CD14-positive monocyte (primary cell): ENCODE measurements at regions of chr3 and their contacts with region 1.

Region 1: DNA sequence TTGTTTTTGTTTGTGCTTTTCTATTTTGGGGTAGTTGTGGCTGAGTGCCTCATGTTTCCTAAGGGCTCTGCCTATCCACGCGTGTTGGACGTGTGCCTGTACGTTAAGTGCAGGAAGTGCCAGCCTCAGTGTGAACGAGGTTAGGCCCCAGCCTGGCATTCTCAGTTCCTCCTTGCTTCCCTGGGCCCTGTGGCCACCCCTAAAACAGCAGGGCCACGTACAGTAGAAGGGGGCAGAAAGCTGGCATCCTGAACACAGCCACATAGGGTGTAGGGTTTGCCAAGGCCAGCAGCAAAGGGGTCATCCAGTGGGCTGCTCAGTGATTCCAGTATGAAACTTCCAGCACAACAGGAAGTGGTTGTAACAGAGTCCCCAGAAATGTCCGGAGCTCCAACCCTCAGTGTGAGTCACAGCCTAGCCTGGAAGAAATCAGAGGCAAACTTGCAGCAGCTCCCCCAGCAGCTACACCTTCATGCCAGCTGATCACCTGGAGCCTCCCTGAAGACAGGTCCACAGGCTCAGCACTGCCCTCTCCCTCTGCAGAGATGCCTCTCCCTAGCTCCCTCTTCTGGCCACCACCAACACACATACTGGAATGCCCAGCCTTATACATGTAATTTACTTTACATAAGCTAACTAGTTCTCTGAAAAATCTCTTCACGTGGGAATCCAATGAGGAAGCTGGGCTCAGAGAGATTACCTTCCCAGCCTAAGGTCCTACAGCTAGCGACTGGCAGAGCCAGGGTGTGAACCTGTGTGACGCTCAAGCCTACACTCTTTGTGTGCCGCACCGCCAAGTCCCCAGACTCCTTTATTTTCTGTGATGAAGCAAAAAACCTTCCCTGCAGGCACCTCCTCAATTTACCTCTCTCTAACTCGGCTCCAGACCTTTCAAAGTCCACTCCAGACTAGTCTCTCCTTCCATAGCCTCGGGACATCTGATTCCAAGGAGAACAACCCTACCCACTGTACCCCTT is 26.6 kb downstream of the ILDR1 start:
- DNase-seq: peak; percentile 75 to 90 (median 86)
- H3K4me3 ChIP-seq: peak overlapping the region in 1 of 3 experiments; percentile 41
- H3K4me3 Mint-ChIP-seq: peak overlapping the region in 1 of 2 donors; percentile 74
- H3K27ac ChIP-seq: peak overlapping the region; percentile 79 to 91
- H3K27ac Mint-ChIP-seq: peak overlapping the region; percentile 93 to 97 (median 97)
- H3K4me1 ChIP-seq: peaks cover 75 to 85% of the 10 kb centered on the region in 2 donors
- H3K4me1 Mint-ChIP-seq: peaks cover 84% of the 10 kb centered on the region
- H3K27me3 ChIP-seq: no peaks in the 10 kb centered on the region
- H3K27me3 Mint-ChIP-seq: peaks cover 0 to 5% (median 2%) of the 10 kb centered on the region in 3 donors
- CTCF ChIP-seq: peak; percentile 44

Region 2: GRCh38 chr3:122055215-122055614 is 59.8 kb after region 1 on chr3 and contains the start of gene CD86:
- intact Hi-C with region 1: loop called (anchors 5 to 10 kb)
- DNase-seq: peak; percentile 90 to 94 (median 94)
- H3K4me3 ChIP-seq: peak within 1 kb of the TSS; percentile 72 to 98 (median 89)
- H3K4me3 Mint-ChIP-seq: peak within 1 kb of the TSS; percentile 94 to 97
- H3K27ac ChIP-seq: peak within 1 kb of the TSS; percentile 49 to 85
- H3K27ac Mint-ChIP-seq: peak within 1 kb of the TSS; percentile 93 to 99 (median 94)
- H3K4me1 ChIP-seq: peaks cover 38 to 53% of the 10 kb centered on the region in 2 donors
- H3K4me1 Mint-ChIP-seq: peaks cover 48% of the 10 kb centered on the region
- H3K27me3 ChIP-seq: no peaks in the 10 kb centered on the region
- H3K27me3 Mint-ChIP-seq: peaks cover 0 to 4% (median 2%) of the 10 kb centered on the region in 3 donors
- CTCF ChIP-seq: no peak
- polyA plus RNA-seq, gene CD86: 75.7 to 321 (median 273) TPM

Region 3: DNA sequence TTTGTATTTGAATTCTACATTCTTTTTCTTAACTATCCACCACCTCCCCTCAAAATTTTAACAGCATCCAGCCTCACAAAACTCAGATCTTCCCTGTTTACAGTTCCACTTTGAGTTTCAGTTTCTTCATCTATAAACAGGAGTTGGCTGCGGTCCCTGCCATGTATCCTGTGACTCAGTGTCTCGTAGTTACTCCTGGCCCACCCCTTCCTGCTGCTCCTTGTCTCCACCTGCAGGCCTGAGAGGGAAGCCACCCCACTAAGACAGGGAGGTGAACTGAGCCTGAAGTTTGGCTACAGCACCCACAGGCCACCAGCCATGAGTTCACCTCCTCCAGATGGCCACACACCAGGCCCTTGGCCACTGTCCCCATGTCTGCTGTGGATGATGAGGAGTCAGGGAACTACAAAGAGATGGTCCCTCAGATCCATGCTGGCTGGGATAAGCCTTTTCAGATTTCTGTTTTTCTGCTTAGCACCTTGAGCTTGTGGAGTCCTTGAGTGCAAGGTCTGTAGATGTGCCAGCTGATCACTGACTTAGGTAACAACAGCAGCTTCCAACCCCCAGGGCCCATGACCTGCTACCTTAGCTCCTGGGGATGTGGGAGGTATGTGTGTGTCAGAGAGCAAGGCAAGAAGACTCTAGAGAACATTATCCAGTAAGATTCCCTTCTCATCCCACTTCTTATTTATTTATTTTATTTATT is 97.2 kb after region 1 on chr3:
- intact Hi-C with region 1: loop called in 1 of 2 experiments (anchors 5 kb)
- DNase-seq: peak; percentile 72 to 90 (median 89)
- H3K4me3 ChIP-seq: peak overlapping the region in 1 of 3 experiments; percentile 27
- H3K4me3 Mint-ChIP-seq: peak overlapping the region; percentile 49 to 76
- H3K27ac ChIP-seq: peak overlapping the region; percentile 57 to 79
- H3K27ac Mint-ChIP-seq: peak overlapping the region; percentile 86 to 96 (median 94)
- H3K4me1 ChIP-seq: peaks cover 44 to 50% of the 10 kb centered on the region in 2 donors
- H3K4me1 Mint-ChIP-seq: peaks cover 50% of the 10 kb centered on the region
- H3K27me3 ChIP-seq: no peaks in the 10 kb centered on the region
- H3K27me3 Mint-ChIP-seq: peaks cover 0 to 3% (median 0%) of the 10 kb centered on the region in 3 donors
- CTCF ChIP-seq: peak; percentile 80

Region 4: DNA sequence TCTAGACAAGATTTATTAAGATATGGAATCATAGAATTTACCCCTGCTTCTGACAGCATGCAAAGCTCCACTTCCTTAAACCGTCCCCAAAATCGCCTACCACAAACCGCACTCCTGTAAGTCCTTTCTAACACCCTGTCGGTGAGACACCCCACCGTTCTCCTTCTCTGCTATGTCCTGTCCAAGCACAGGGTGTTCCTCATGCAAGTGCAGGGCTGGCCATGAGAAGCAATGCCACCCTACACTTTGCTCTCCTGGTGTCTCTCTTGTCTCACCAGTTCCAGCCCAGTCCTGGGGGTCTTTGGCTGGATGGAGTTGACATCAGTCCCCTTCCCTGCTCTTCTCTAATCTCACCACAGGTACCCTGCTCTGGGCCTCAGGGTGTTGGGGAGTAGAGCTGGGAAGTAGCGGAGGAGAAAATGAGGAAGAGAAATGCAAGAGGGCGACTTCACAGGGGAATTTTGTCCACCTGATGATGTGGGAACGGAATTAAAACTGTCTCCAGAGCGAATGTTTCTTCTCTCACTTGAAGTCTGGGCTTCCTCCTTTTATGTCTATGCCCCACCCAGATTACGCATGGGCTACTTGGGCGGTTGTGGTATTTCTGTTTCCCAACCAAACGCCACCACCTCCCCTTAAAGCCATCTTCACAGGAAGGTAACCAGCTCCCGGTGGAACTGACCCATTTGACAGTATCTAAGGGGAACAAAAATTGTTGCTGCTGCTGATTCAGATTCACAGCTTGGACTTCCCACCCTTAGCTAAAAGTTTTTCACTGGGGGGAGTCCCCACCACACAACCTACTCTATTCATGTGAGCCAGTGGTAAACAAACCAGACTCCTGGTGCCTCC is 237.9 kb after region 1 on chr3:
- intact Hi-C with region 1: loop called in 1 of 2 experiments (anchors 10 kb)
- DNase-seq: peak; percentile 91 to 99 (median 95)
- H3K4me3 ChIP-seq: peak overlapping the region; percentile 19 to 66 (median 57)
- H3K4me3 Mint-ChIP-seq: peak overlapping the region; percentile 70 to 92
- H3K27ac ChIP-seq: peak overlapping the region; percentile 85 to 98
- H3K27ac Mint-ChIP-seq: peak overlapping the region; percentile 96 to 100 (median 98)
- H3K4me1 ChIP-seq: peaks cover 49 to 58% of the 10 kb centered on the region in 2 donors
- H3K4me1 Mint-ChIP-seq: peaks cover 60% of the 10 kb centered on the region
- H3K27me3 ChIP-seq: no peaks in the 10 kb centered on the region
- H3K27me3 Mint-ChIP-seq: peaks cover 0 to 3% (median 1%) of the 10 kb centered on the region in 3 donors
- CTCF ChIP-seq: peak; percentile 6

Region 5: DNA sequence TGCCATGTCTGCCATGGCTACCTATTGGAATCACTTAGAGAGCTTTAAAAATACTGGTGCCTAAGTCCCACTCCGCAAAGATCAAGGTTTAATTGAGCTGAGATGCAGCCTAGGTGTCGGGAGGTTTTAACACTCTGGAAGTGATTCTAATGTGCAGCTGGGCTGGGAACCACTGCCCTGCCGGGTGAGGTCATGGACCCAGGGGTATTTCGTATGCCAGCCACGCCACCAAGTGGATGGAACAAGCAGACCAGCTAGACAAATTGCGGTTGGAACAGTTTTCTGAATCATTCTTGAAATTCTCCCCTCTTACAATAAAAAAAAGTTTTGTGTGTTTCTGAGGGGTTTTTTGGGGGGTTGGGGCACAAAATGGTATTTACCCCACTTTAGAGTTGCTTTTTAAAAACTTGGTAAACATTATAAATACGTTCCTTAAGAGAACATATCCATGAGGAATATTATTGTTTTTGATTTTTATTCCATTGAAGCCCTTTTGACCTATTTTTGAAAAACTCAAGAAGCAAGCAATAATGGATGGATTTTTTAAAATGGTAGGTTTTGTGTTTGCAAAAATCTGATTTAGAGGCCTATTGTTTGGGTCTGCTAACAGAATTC is 263.4 kb after region 1 on chr3:
- intact Hi-C with region 1: loop called in 1 of 2 experiments (anchors 5 kb)
- DNase-seq: peak; percentile 70 to 87 (median 79)
- H3K4me3 ChIP-seq: no peak overlapping the region
- H3K4me3 Mint-ChIP-seq: peak overlapping the region in 1 of 2 donors; percentile 30
- H3K27ac ChIP-seq: no peak overlapping the region
- H3K27ac Mint-ChIP-seq: peak overlapping the region in 1 of 7 donors; percentile 40
- H3K4me1 ChIP-seq: peaks cover 59 to 74% of the 10 kb centered on the region in 2 donors
- H3K4me1 Mint-ChIP-seq: peaks cover 49% of the 10 kb centered on the region
- H3K27me3 ChIP-seq: no peaks in the 10 kb centered on the region
- H3K27me3 Mint-ChIP-seq: peaks cover 0 to 5% (median 2%) of the 10 kb centered on the region in 3 donors
- CTCF ChIP-seq: peak; percentile 81